ENCODE measurements at regions of chr9 and their contacts with region 1.

Region 1: DNA sequence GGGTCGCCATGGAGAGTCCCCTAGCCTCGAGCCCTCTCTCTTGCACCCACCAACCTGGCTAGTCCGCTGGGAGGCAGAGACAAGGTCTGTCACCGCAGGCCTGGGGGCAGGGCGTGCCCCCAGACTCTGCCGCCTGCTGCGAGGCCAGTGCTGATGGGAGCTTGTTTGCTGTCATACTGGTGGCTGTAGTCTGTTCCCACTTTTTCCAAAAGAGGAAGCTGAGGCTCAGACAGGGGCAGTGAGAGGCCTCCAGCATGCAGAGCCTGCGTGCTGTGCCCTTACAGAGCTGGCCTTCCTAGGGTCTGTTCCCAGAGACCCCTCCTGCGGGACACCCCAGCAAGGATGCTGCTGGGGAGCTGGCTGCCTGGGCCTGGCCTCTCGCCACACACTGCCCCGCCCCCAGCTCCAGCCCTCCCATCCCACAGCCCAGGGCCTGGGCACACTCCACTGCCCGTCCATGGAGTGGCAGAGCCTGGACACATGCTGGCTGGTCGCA is 21.0 kb upstream of the SUSD3 start:
- DNase-seq: no peak
- H3K4me3 ChIP-seq: no peak overlapping the region
- H3K27ac ChIP-seq: no peak overlapping the region
- H3K4me1 ChIP-seq: peaks cover 0 to 9% (median under 1%) of the 10 kb centered on the region in 4 experiments; a peak in 3 of 7 replicates
- H3K27me3 ChIP-seq: no peaks in the 10 kb centered on the region
- CTCF ChIP-seq: no peak
- EP300 ChIP-seq: no peak
- POLR2A ChIP-seq: no peak
- RAD21 ChIP-seq: no peak

Region 2: DNA sequence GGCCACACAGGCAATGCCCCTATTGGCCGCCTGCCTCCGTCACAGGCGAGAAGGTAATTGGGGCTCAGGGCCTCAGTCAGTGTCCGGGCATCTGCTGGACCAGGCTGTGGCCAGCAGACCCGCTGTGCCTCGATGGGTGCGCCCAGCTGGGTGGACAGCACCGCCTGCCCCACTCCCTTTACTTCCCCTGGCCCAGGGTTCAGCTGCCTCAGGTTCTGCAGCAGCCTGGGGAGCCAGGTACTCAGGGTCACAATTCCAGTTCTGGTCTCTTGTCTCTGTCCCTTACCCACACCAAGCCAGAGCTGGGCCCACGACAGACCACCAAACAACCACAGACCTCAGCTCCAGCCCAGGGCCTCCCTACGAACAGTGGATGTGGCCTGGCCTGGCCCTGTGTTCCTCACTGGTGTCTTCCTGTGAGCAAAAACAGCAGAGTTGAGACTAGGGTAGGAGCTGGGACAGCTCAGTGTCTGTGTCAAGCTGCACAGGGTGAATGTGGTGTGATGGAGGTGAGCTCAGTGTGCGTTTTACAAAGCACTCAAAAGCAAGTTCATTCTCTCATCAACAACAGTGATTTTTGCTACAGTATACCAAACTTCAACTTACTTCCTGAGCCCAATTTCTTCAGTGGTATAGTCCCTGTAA is 12.4 kb before region 1 on chr9:
- CTCF ChIA-PET with region 1: interaction called, 28 read pairs
- POLR2A ChIA-PET with region 1: no interaction called
- DNase-seq: no peak
- H3K4me3 ChIP-seq: no peak overlapping the region
- H3K27ac ChIP-seq: no peak overlapping the region
- H3K4me1 ChIP-seq: no peaks in the 10 kb centered on the region; a peak in 1 of 7 replicates
- H3K27me3 ChIP-seq: no peaks in the 10 kb centered on the region; a peak in 1 of 7 replicates
- CTCF ChIP-seq: no peak
- EP300 ChIP-seq: no peak
- POLR2A ChIP-seq: no peak
- RAD21 ChIP-seq: no peak

Region 3: DNA sequence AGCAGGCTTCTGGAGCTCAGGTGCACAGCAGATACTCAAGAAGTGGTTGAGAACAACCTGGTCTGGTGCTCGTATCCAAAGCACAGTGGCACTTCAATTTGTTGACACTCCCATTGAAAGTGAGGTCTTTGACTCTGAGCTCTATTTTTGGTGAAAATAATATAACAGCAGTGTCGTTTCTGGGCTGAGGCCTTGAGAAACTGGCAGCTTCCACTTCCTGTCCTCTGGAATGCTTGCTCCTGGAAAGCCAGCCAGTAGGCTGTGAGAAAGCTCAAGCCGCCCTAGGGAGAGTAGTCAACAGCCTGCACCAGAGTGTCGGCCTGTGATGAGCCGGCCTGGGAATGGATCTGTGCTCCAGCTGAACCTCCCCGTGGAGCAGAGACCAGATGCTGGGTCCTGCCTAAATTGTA is 14.2 kb after region 1 on chr9:
- CTCF ChIA-PET with region 1: interaction called, 44 read pairs
- POLR2A ChIA-PET with region 1: interaction called, 4 read pairs
- DNase-seq: no peak
- H3K4me3 ChIP-seq: no peak overlapping the region
- H3K27ac ChIP-seq: no peak overlapping the region
- H3K4me1 ChIP-seq: peaks cover 7 to 13% (median 10%) of the 10 kb centered on the region in 4 experiments
- H3K27me3 ChIP-seq: no peaks in the 10 kb centered on the region; a peak in 2 of 7 replicates
- CTCF ChIP-seq: no peak
- EP300 ChIP-seq: no peak
- POLR2A ChIP-seq: no peak
- RAD21 ChIP-seq: no peak

Measured in H1 (cell line).